PC-9 (cell line): ENCODE measurements at regions of chr17 and their contacts with region 1.

Region 1: GRCh38 chr17:19263641-19264051 is 26.5 kb downstream of the EPN2 start:
- DNase-seq: no peak
- H3K4me3 ChIP-seq: no peak overlapping the region
- H3K27ac ChIP-seq: no peak overlapping the region
- H3K4me1 ChIP-seq: peaks cover 10% of the 10 kb centered on the region; the same call in 1 of the 2 replicates
- H3K27me3 ChIP-seq: no peaks in the 10 kb centered on the region
- CTCF ChIP-seq: no peak

Region 2: DNA sequence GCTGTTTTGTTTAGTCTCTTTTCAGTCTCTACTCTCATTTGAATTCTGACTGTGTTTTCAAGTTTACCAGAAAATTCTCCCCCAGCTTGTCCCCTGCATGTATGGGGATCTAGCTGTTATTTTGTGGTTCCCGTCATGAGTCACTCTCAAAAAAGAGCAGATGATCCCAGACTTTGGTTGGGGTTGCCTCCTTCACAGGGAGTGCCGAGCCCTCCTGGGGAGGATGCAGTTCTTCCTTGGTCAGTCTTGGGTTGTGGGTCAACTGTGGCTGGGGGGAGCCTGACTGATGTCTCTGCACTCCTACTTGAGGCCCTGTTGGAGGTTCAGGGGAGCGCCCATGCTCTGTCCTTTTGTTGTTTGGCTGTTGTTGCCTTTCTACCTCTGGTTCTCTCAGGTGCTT is 11.2 kb after region 1 on chr17:
- CTCF ChIA-PET with region 1: no interaction called
- POLR2A ChIA-PET with region 1: no interaction called
- intact Hi-C with region 1: no loop called
- DNase-seq: no peak
- H3K4me3 ChIP-seq: no peak overlapping the region
- H3K27ac ChIP-seq: no peak overlapping the region
- H3K4me1 ChIP-seq: no peaks in the 10 kb centered on the region
- H3K27me3 ChIP-seq: no peaks in the 10 kb centered on the region
- CTCF ChIP-seq: no peak

Region 3: GRCh38 chr17:19569785-19570543 is 306.3 kb after region 1 on chr17:
- CTCF ChIA-PET with region 1: no interaction called
- POLR2A ChIA-PET with region 1: interaction called, 34 read pairs
- intact Hi-C with region 1: no loop called
- DNase-seq: peak in 1 of 2 experiments; percentile 51
- H3K4me3 ChIP-seq: no peak overlapping the region
- H3K27ac ChIP-seq: no peak overlapping the region
- H3K4me1 ChIP-seq: no peaks in the 10 kb centered on the region
- H3K27me3 ChIP-seq: no peaks in the 10 kb centered on the region
- CTCF ChIP-seq: no peak

Region 4: GRCh38 chr17:20797292-20797691 is 1533.6 kb after region 1 on chr17:
- CTCF ChIA-PET with region 1: no interaction called
- POLR2A ChIA-PET with region 1: interaction called, 17 read pairs
- intact Hi-C with region 1: no loop called
- DNase-seq: no peak
- H3K4me3 ChIP-seq: no peak overlapping the region
- H3K27ac ChIP-seq: no peak overlapping the region
- H3K4me1 ChIP-seq: peaks cover 5% of the 10 kb centered on the region; the same call in 1 of the 2 replicates
- H3K27me3 ChIP-seq: no peaks in the 10 kb centered on the region
- CTCF ChIP-seq: no peak